ENCODE measurements at regions of chr10 and their contacts with region 1.

Region 1: DNA sequence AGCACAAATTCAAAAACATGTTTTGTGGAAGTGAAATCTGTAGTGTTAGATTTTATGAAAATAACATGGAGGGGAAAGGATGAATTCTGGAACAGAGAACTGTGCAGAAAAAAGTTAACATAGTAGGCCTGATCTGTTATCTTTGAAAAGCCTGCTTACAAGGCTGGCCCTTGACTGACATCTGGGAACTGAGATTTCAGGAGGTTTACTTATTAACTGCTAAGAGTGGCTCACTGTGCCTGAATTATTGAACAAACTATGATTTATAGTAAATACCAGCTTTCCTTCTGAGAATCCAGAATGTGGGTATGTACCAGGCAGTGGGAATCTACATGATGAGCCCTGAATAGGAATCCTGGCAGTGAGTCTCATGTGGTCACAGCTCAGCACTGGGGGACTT is 30.5 kb downstream of the NSUN6 start:
- DNase-seq: no peak
- ATAC-seq: no peak
- H3K4me3 ChIP-seq: no peak overlapping the region
- H3K4me3 Mint-ChIP-seq: no peak overlapping the region
- H3K27ac ChIP-seq: no peak overlapping the region
- H3K27ac Mint-ChIP-seq: no peak overlapping the region
- H3K4me1 ChIP-seq: no peaks in the 10 kb centered on the region
- H3K4me1 Mint-ChIP-seq: no peaks in the 10 kb centered on the region
- H3K27me3 ChIP-seq: no peaks in the 10 kb centered on the region
- H3K27me3 Mint-ChIP-seq: no peaks in the 10 kb centered on the region
- CTCF ChIP-seq: no peak

Region 2: DNA sequence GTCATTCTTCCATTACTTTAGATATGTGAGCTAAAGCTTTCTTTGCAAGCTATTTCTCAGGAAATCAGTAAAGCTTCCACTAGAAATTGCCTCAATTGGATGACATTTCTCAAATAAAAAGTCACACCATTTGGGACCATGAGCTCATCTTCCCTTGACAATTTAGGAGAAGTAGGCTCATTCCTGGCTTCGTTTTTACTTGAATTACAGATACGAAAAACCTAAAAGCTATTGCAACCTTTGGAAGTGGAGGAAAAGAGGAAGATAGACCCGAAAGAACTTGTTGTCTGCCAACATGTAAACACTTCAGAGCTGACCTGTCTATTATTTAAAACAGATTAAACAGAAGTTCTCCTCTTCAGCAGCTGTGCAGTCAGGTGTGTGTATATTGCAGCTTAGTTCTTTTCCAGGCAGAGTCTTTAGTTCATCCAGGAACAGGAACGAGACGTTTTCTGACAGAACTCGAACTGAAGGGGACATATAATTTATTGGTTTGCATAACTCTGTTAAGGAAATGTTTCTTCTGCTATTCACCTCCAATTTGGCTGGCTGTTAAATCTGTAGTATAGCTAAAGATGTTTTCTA is 1123.3 kb before region 1 on chr10:
- CTCF ChIA-PET with region 1: no interaction called
- POLR2A ChIA-PET with region 1: no interaction called
- intact Hi-C with region 1: no loop called
- DNase-seq: no peak
- ATAC-seq: no peak
- H3K4me3 ChIP-seq: no peak overlapping the region
- H3K4me3 Mint-ChIP-seq: no peak overlapping the region
- H3K27ac ChIP-seq: no peak overlapping the region
- H3K27ac Mint-ChIP-seq: no peak overlapping the region
- H3K4me1 ChIP-seq: no peaks in the 10 kb centered on the region
- H3K4me1 Mint-ChIP-seq: no peaks in the 10 kb centered on the region
- H3K27me3 ChIP-seq: no peaks in the 10 kb centered on the region
- H3K27me3 Mint-ChIP-seq: peaks cover 2% of the 10 kb centered on the region
- CTCF ChIP-seq: no peak

Region 3: GRCh38 chr10:18545621-18546305 is 75.1 kb before region 1 on chr10:
- CTCF ChIA-PET with region 1: no interaction called
- POLR2A ChIA-PET with region 1: no interaction called
- intact Hi-C with region 1: loop called in 1 of 2 experiments (anchors 10 kb)
- DNase-seq: no peak
- ATAC-seq: no peak
- H3K4me3 ChIP-seq: no peak overlapping the region
- H3K4me3 Mint-ChIP-seq: no peak overlapping the region
- H3K27ac ChIP-seq: no peak overlapping the region
- H3K27ac Mint-ChIP-seq: no peak overlapping the region
- H3K4me1 ChIP-seq: no peaks in the 10 kb centered on the region
- H3K4me1 Mint-ChIP-seq: no peaks in the 10 kb centered on the region
- H3K27me3 ChIP-seq: no peaks in the 10 kb centered on the region
- H3K27me3 Mint-ChIP-seq: no peaks in the 10 kb centered on the region
- CTCF ChIP-seq: no peak